Gastrocnemius medialis (tissue), 4 donors: ENCODE measurements at regions of chr7 and their contacts with region 1.

Region 1: DNA sequence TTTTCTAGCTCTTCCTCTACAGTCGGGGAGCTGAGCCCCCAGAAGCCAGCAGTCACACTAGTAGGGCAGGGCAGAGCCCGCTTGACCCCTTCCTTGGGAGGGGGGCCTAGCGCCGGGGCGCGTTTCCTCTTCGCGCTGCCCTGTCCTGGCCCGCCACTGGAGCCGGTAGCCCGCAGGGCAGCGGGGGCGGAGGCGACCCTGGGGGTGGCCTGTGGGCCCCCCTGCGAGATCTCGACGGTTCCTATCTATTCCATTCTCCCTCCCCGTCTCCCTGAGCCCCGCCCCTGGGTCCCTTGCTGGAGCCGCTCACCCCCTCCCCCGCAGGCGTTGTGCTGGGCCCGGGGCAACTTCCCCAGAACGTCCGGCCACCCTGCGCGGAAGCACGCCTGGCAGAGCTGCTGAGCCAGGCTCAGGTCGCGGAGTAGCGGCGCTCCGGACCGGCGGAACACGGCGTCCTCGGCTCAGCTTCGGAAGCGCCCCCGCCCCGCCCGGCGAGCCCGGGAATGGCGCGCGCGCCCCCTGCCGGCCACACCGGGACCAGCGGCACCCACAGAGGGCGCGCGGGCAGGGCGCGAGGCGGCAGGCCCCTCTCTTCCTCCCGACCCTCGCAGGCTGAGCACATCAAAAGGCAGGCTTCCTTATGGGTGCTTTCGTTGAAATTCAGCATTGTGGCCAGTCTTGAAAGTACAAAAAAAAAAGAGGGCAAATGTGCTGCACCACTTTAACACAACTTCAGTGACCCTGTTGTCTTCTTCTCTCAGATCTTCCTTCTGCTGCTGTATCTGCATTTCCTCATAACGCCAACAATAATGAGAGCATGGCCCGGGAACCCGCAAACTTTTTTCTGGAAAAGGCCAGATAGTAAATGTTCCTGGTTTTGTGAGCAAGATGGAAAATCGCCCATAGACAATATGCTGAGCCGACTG is 327.6 kb downstream of the TNS3 start:
- DNase-seq: peak; percentile 85
- ATAC-seq: peak; percentile 81 to 83
- H3K4me3 ChIP-seq: peak overlapping the region; percentile 60 to 70 (median 68)
- H3K27ac ChIP-seq: peak overlapping the region; percentile 90 to 96 (median 94)
- H3K4me1 ChIP-seq: peaks cover 16 to 20% of the 10 kb centered on the region in 2 donors
- H3K27me3 ChIP-seq: no peaks in the 10 kb centered on the region
- CTCF ChIP-seq: peak; percentile 79 to 100 (median 97)
- POLR2A ChIP-seq: peak in 1 of 2 donors; percentile 39

Region 2: GRCh38 chr7:46776790-46777189 is 477.6 kb before region 1 on chr7:
- in situ Hi-C with region 1: no loop called
- intact Hi-C with region 1: loop called (anchors 10 kb)
- DNase-seq: no peak
- ATAC-seq: no peak
- H3K4me3 ChIP-seq: no peak overlapping the region
- H3K27ac ChIP-seq: no peak overlapping the region
- H3K4me1 ChIP-seq: peaks cover 18 to 42% of the 10 kb centered on the region in 2 donors
- H3K27me3 ChIP-seq: no peaks in the 10 kb centered on the region
- CTCF ChIP-seq: no peak
- POLR2A ChIP-seq: no peak

Region 3: GRCh38 chr7:47418601-47419381 is 164.4 kb after region 1 on chr7:
- in situ Hi-C with region 1: no loop called
- intact Hi-C with region 1: no loop called
- DNase-seq: peak in 1 of 2 donors; percentile 68
- ATAC-seq: peak; percentile 32 to 82
- H3K4me3 ChIP-seq: no peak overlapping the region
- H3K27ac ChIP-seq: no peak overlapping the region
- H3K4me1 ChIP-seq: peaks cover 17 to 36% of the 10 kb centered on the region in 2 donors
- H3K27me3 ChIP-seq: no peaks in the 10 kb centered on the region
- CTCF ChIP-seq: no peak
- POLR2A ChIP-seq: no peak